Activated T-helper 1 cell treated with anti-CD3 and anti-CD28 coated beads, Interleukin-12 subunit alpha, Interleukin-12 subunit beta, Interleukin-2, Interleukin-4 antibody, amounts not matched to agents 30 ng/mL and 10 ng/mL and 1 ng/mL, durations not matched to agents 14 hours and 24 hours and 36 hours (primary cell): ENCODE measurements at regions of chr1 and their contacts with region 1.

Region 1: DNA sequence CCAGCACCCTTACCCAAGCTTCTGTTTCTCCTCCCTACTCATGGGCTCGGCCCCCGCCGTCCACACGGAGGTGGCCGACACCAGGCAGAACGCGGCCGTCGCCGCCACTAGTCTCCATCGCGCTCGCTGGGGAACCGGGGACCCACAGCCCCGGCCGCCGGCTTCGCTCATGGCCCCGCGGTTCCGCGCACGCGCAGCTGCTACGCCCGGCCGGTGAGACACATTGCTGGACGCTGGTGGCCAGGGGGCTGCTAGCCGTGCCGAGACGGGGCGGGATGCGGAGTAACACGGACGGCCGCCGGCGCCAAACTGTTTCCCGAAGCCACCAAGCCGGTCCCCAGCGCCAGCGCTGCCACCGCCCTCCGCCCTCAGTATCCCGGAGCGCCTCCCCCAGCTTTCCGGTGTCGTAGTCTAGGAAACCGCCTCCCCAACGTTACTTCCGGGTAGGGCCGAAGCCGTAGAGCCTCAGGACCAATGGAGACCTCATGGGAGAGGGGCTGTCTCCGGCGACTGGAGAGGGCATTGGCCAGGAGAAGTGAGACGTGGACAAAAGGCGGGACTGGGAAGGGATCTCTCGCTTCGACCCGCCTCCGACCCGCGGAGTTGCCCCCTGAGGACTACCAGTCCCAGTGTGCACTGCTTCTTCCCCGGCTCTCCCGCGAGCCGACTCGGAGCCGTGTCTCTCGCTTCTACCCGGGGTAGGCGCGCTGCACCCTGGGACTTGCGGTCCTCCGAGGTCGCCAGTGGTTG is at the start of gene EDEM3:
- DNase-seq: peak; percentile 97
- H3K4me3 Mint-ChIP-seq: peak within 1 kb of the TSS; percentile 89
- H3K27ac Mint-ChIP-seq: peak within 1 kb of the TSS; percentile 77
- H3K4me1 Mint-ChIP-seq: peaks cover 29% of the 10 kb centered on the region
- H3K27me3 Mint-ChIP-seq: peaks cover 5% of the 10 kb centered on the region
- total RNA-seq, gene EDEM3: 23.8 and 28.5 TPM in 2 replicates

Region 2: DNA sequence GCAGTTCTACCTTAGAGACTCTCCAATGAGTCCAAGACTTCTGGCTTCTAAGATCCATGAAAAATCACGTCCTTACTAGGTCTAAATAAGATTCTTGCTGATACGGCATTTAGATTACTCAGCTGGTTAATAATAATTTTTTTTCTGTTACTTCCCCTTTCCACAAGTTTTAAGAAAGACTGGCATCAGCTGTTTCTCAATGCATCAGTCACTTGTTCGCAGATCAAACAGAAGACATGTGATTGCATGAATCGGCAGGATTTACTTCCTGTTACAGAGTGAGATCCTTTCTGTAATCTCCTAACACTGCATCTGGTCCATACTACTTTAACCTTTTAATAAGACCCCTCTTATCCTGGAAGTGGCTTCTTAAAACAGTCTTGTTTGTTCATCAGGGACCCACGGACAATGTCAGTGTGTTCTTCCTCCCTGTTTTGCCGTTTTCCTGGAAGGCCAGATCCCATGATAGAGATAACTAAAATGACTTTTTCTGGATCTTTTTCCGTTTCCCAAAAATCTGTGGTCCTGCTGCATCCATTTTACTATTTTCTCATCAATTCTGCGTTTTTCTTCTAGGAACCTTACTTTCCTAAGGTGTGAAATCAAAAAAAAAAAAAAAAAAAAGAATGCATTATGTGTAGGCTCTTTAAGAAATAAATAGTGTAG is 1959.0 kb before region 1 on chr1:
- intact Hi-C with region 1: no loop called
- DNase-seq: no peak
- H3K4me3 Mint-ChIP-seq: no peak overlapping the region
- H3K27ac Mint-ChIP-seq: no peak overlapping the region
- H3K4me1 Mint-ChIP-seq: peaks cover 11% of the 10 kb centered on the region
- H3K27me3 Mint-ChIP-seq: peaks cover 3% of the 10 kb centered on the region

Region 3: DNA sequence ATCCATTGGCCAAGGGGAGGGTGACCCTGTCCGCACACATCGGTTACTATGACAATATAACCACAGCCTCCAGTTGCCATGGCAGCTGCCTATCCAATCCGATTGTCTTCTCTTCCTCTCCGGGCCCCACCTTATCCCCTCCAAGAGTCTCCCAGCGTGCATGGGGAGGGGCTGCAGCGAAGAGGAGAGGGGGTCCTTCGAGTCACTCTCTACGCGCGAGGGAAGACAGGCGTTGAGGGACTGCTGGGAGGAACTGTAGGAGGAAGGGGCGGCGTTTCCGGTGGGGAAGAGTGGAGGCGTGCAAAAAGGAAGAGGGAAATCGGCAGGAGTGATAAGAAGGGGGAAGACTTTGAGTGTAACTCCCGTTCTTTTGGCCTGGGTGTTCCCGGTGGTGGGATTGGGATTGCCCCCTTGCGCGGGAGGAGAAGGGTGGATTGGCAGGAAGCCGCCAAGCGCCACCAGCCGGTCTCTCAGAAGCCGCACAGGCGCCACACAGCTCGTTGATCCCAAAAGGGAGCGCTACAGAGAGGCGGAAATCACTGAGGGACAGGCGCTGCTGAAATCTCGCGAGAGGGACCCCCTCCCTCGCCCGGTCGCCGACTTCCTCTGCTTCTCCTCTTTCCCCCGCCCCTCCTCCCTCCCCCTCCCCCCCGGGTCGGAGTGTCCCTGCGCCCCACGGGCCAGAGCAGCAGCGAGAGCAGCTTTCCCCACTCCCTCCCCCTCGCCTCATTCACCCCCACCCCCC is 1282.7 kb before region 1 on chr1:
- intact Hi-C with region 1: loop called (anchors 2 kb)
- DNase-seq: peak; percentile 91
- H3K4me3 Mint-ChIP-seq: peak overlapping the region; percentile 90
- H3K27ac Mint-ChIP-seq: peak overlapping the region; percentile 99
- H3K4me1 Mint-ChIP-seq: peaks cover 28% of the 10 kb centered on the region
- H3K27me3 Mint-ChIP-seq: peaks cover 2% of the 10 kb centered on the region

Region 4: GRCh38 chr1:184051485-184052193 is 703.0 kb before region 1 on chr1 and contains the start of gene TSEN15:
- intact Hi-C with region 1: loop called (anchors 5 kb)
- DNase-seq: peak; percentile 71
- H3K4me3 Mint-ChIP-seq: peak within 1 kb of the TSS; percentile 99
- H3K27ac Mint-ChIP-seq: peak within 1 kb of the TSS; percentile 99
- H3K4me1 Mint-ChIP-seq: peaks cover 40% of the 10 kb centered on the region
- H3K27me3 Mint-ChIP-seq: peaks cover 28% of the 10 kb centered on the region
- total RNA-seq, gene TSEN15: 49.8 and 50.2 TPM in 2 replicates

Region 5: GRCh38 chr1:184724843-184725242 is 29.8 kb before region 1 on chr1:
- intact Hi-C with region 1: no loop called
- DNase-seq: no peak
- H3K4me3 Mint-ChIP-seq: no peak overlapping the region
- H3K27ac Mint-ChIP-seq: no peak overlapping the region
- H3K4me1 Mint-ChIP-seq: no peaks in the 10 kb centered on the region
- H3K27me3 Mint-ChIP-seq: no peaks in the 10 kb centered on the region

Region 6: DNA sequence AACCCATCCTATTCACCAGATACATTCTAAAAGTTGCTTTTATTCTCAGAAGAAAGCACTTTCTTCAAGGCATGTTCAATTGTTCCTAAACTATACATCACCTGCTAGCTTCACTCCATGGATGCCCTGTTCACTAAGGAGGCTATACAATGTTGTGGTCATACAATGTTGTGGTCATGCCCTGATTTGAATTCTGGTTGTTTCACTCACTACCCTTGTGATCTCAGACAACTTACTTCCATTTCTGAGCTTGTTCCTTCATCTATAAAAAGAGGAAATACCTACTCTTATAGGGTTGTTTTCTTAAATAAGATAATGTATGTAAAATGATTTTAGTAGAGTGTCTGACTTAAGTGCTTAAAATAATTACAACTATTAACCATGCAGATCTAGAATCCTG is 19.7 kb before region 1 on chr1:
- intact Hi-C with region 1: no loop called
- DNase-seq: no peak
- H3K4me3 Mint-ChIP-seq: no peak overlapping the region
- H3K27ac Mint-ChIP-seq: no peak overlapping the region
- H3K4me1 Mint-ChIP-seq: peaks cover 5% of the 10 kb centered on the region
- H3K27me3 Mint-ChIP-seq: no peaks in the 10 kb centered on the region

Region 7: GRCh38 chr1:184805667-184806295 is 51.1 kb after region 1 on chr1:
- intact Hi-C with region 1: loop called (anchors 1 kb)
- DNase-seq: peak; percentile 68
- H3K4me3 Mint-ChIP-seq: no peak overlapping the region
- H3K27ac Mint-ChIP-seq: no peak overlapping the region
- H3K4me1 Mint-ChIP-seq: peaks cover 6% of the 10 kb centered on the region
- H3K27me3 Mint-ChIP-seq: no peaks in the 10 kb centered on the region

Region 8: DNA sequence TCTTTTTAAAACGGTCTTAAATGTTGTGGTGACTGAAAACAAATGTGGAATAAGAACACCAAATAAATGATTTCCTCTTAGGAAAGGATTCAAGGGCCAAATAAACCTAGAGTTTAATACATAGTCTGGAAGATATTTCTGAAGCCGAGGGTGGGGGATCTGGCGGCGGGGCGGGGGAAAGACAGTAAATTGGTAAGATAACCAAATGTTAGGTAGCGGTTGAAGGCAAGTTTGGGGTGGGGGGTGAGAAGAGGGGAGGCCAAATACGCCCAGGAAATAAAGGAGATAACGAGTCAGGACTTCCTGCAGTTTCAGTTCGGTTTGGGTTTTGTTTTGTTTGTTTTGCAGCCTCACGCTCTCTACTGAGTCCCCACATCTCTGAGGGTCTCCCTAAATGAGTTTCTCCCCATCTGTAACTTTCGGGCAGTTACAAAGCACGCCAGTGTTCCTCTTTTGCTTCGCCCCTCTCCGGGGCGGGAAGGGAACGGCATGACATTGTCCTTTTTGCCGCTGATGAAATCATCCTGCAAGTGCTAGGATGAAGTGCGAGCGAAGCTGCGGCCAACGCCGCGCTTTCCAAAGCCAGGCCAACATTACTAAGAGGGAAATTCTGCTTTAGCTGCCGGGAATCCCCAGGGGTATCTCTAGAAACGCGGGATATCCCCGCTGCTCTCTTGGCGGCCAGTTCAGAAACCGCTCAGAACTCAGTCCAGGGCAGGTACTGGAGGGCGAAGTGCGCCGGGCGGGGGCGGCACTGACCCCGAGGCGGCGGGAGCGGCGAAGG is 218.8 kb after region 1 on chr1:
- intact Hi-C with region 1: loop called (anchors 1 kb)
- DNase-seq: no peak
- H3K4me3 Mint-ChIP-seq: peak overlapping the region; percentile 90
- H3K27ac Mint-ChIP-seq: peak overlapping the region; percentile 95
- H3K4me1 Mint-ChIP-seq: peaks cover 67% of the 10 kb centered on the region
- H3K27me3 Mint-ChIP-seq: peaks cover 15% of the 10 kb centered on the region

Region 9: GRCh38 chr1:185559684-185560331 is 805.2 kb after region 1 on chr1:
- intact Hi-C with region 1: loop called (anchors 10 kb)
- DNase-seq: peak; percentile 74
- H3K4me3 Mint-ChIP-seq: peak overlapping the region; percentile 52
- H3K27ac Mint-ChIP-seq: peak overlapping the region; percentile 66
- H3K4me1 Mint-ChIP-seq: peaks cover 52% of the 10 kb centered on the region
- H3K27me3 Mint-ChIP-seq: no peaks in the 10 kb centered on the region